RWPE1 (cell line): ENCODE measurements at regions of chr11 and their contacts with region 1.

Region 1: GRCh38 chr11:66607126-66607834 is 9.2 kb upstream of the RBM14 start:
- DNase-seq: peak; percentile 27
- H3K27ac ChIP-seq: peak overlapping the region; percentile 91
- CTCF ChIP-seq: no peak

Region 2: DNA sequence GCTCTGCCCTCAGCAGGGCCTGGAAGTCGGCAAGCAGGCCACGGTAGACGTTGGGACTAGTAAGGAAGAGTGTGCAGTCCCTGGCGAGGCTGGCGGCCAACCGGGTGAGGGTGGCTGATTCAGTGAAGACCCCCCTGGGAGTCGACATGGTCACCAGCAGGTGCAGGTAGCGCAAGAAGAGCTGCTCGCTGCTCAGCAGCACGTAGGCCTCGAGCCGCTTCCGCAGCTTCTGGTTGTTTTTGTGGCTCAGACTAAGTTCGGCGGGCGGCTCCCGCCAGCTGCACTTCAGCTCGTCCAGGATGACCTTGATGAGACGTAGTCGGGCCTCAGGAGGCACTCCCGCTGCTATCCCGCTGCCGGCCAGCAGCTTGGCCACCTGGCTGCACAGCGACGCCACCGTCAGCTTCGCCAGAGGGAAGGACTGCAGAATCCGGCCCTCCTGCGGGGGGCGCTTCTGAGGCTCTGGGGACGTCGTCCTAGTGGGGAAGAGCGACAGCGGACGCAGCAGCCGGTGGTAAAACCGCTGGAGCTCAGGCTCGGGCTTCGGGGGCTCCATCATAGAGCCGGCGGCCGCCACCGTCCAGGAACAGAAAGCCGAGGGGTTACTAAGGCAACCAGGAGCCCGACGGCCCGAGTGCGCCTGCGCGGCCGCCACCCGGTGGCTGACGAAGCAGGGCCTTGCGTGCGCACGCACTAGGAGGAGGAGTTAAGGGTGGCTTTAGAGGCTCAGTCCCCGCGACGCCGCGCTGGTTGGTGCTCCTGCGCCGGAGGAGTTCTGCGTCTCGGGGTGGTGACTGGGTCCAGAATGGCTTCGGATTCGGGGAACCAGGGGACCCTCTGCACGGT is 14.6 kb before region 1 on chr11 and contains the starts of genes CCDC87 and CCS:
- CTCF ChIA-PET with region 1: no interaction called
- POLR2A ChIA-PET with region 1: no interaction called
- DNase-seq: peak; percentile 100
- H3K27ac ChIP-seq: peak within 1 kb of the TSS; percentile 73
- CTCF ChIP-seq: peak; percentile 76

Region 3: DNA sequence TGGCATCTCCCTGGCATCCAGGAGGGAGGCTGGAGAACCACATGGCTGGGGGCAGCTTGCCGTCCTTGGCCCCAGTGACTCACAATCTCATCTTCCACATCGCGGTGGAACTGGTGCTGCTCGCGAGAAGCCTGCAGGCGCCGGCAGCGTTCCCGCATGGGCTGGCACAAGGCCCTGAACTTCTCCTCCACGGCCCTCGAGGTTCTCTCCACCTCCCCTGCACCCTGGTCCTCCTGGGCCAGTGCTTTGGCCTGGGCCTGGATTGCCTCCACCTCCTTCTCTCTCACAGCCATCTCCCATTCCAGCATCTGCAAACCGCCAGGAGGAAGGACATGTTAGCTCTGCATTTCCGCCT is 86.8 kb after region 1 on chr11:
- CTCF ChIA-PET with region 1: interaction called, 10 read pairs
- POLR2A ChIA-PET with region 1: no interaction called
- DNase-seq: no peak
- H3K27ac ChIP-seq: peak overlapping the region; percentile 88
- CTCF ChIP-seq: no peak